Activated CD8-positive, alpha-beta T cell treated with anti-CD3 and anti-CD28 coated beads for 36 hours (primary cell): ENCODE measurements at regions of chr16 and their contacts with region 1.

Region 1: DNA sequence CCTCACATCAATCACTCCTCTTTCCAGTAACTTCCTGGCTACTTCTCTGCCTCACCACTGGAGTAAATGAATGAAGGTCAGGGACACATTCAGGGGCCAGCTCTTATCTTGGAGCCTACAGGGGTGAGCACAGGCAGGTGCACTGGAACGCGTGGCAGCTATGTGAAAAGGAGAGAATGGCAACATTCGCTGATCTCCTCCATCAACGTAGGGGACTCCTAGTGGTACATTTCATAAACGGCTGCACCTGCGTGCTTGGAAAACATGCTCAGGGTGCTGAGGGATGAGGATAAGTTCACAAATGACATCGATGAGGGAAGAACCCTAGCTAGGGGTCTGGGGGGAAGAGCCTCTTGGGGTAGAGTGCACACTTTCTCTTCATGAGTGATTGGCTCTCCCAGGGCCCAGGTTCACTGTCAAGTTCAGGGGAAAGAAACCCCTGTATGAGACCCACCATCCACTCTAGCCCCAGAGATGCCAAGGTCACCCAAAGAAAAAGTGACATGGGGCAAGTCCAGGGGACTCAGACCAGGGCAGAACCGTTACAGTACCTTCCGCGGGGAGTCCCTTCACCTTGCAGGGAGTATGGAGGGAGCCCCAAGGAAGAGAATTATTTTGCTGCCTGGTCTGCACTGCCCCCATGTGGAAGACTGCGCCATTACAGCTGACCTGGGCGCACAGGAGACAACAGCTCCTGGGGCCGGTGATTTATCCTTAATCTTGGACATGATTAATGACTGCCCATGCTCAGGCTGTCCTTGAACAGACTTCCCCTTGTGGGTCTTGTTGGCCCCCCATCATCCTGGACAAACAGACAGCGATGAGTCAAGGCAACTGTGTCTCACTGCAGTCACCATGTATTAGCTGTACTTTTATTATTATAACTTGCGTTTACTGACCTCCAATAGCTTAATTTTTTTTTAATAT is 30.1 kb downstream of the VAC14 start:
- DNase-seq: peak; percentile 73
- ATAC-seq: peak; percentile 97
- H3K4me3 Mint-ChIP-seq: no peak overlapping the region
- H3K27ac Mint-ChIP-seq: no peak overlapping the region
- H3K4me1 Mint-ChIP-seq: no peaks in the 10 kb centered on the region
- H3K27me3 Mint-ChIP-seq: no peaks in the 10 kb centered on the region
- CTCF ChIP-seq: peak; percentile 97

Region 2: DNA sequence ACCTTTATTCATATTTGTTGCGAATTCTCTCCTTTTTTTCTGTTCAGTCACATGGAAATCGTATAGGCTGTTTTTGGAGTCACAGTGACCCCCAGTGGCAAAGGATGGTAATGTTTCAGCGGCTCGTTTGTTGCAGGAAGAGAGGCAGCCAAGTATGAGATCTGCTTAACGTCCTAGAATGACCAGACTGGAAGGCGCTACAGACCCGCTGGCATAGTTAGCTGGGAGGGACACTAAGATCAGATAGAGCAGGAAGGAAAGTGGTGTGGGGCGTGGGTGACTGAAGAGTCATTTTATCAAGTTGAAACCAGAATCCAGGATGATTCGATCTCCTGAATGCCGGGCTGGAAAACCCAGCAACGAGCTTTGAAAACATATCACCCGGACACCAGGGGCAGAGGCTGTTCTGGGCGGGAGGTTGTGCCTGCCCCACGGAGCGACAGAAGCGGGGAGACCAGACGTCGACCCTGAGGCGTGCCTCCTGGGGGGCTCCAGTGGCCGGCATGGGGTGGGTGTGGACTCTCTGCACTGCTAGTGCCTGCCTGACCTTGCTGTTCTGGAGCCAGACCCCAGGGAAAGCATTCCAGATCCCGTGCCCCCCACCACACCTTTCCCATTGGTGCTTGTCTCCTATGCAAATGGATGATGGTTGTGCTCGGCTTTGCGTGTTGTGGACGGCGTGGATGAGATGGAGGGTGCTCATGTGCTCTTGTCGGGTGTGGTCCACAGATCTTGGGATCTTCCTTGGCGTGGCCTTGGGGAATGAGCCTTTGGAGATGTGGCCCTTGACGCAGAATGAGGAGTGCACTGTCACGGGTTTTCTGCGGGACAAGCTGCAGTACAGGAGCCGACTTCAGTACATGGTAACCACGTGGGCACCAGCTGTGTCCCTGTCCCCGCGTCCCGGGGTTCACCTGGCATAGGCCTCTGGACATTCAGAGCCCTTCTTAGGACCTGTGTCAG is 116.8 kb before region 1 on chr16:
- CTCF ChIA-PET with region 1: interaction called, 23 read pairs
- POLR2A ChIA-PET with region 1: no interaction called
- intact Hi-C with region 1: no loop called
- DNase-seq: peak; percentile 87
- ATAC-seq: peak; percentile 92
- H3K4me3 Mint-ChIP-seq: no peak overlapping the region
- H3K27ac Mint-ChIP-seq: no peak overlapping the region
- H3K4me1 Mint-ChIP-seq: peaks cover 4% of the 10 kb centered on the region
- H3K27me3 Mint-ChIP-seq: no peaks in the 10 kb centered on the region
- CTCF ChIP-seq: peak; percentile 94

Region 3: DNA sequence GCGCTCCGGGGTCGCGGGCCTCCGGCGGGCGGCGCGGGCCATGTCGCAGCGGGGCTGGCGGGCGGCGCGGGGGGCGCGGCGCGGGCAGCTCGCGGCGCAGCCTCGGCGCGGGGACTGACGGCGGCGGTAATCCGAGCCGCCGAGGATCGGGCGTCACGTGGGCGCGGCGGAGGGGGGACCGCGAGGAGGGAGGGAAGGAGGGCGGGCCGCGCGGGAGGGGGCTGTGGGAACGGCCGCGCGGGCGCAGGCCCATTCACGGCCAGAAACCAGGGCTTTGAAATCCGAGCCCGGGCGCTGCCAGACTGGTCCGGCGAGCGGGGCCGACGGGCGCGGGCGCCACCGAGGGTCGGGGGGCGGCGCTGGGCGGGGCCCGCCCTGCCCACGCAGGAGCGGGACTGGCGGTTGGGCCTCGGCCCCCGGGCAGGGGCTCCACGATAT is 84.9 kb before region 1 on chr16 and contains the start of gene MTSS2:
- CTCF ChIA-PET with region 1: interaction called, 94 read pairs
- POLR2A ChIA-PET with region 1: no interaction called
- intact Hi-C with region 1: loop called (anchors 5 kb)
- DNase-seq: peak; percentile 53
- ATAC-seq: peak; percentile 47
- H3K4me3 Mint-ChIP-seq: peak within 1 kb of the TSS; percentile 68
- H3K27ac Mint-ChIP-seq: no peak within 1 kb of the TSS
- H3K4me1 Mint-ChIP-seq: peaks cover 4% of the 10 kb centered on the region
- H3K27me3 Mint-ChIP-seq: no peaks in the 10 kb centered on the region
- CTCF ChIP-seq: no peak
- total RNA-seq, gene MTSS2: 4.4 to 4.6 TPM

Region 4: DNA sequence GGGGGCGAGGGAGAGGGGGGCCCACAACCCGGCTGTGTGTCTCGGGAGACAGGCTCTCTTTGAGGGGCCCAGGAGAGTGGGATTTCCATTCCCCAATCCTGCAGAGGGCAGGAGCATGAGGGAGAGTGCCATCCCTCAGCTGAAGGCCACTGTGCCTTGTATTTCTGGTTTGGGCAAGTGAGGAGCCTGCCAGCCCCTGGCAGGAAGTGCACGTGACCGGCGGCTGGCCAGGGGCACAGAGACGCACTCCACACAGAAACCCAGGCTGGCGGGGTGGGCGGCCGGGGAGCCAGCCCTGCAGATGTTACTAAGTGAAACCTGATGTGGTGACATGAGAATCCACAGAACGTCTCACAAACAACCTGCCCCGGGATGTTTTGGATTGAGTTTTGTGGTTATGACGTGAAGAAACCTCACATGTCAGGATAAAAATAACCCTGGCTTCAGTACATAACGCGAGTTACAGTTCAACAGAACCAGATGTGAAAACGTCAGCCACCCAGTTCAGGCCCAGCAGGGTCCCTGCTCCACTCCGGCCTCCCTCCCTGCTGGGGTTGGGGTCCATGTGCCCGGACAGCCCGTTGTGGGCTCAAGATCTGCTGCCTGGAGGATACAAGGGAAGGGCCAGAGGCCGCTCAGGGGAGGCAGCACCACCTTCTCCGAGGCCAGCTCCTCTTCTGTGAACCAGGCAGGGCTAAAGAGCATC is 33.4 kb before region 1 on chr16:
- CTCF ChIA-PET with region 1: interaction called, 18 read pairs
- POLR2A ChIA-PET with region 1: interaction called, 3 read pairs
- intact Hi-C with region 1: no loop called
- DNase-seq: peak; percentile 94
- ATAC-seq: peak; percentile 79
- H3K4me3 Mint-ChIP-seq: peak overlapping the region; percentile 66
- H3K27ac Mint-ChIP-seq: peak overlapping the region; percentile 96
- H3K4me1 Mint-ChIP-seq: peaks cover 74% of the 10 kb centered on the region
- H3K27me3 Mint-ChIP-seq: no peaks in the 10 kb centered on the region
- CTCF ChIP-seq: no peak

Region 5: GRCh38 chr16:70759666-70760065 is 11.2 kb before region 1 on chr16:
- CTCF ChIA-PET with region 1: interaction called, 19 read pairs
- POLR2A ChIA-PET with region 1: no interaction called
- intact Hi-C with region 1: no loop called
- DNase-seq: no peak
- ATAC-seq: no peak
- H3K4me3 Mint-ChIP-seq: no peak overlapping the region
- H3K27ac Mint-ChIP-seq: no peak overlapping the region
- H3K4me1 Mint-ChIP-seq: peaks cover 4% of the 10 kb centered on the region
- H3K27me3 Mint-ChIP-seq: no peaks in the 10 kb centered on the region
- CTCF ChIP-seq: no peak

Region 6: GRCh38 chr16:71282943-71283342 is 512.1 kb after region 1 on chr16:
- CTCF ChIA-PET with region 1: no interaction called
- POLR2A ChIA-PET with region 1: no interaction called
- intact Hi-C with region 1: no loop called
- DNase-seq: no peak
- ATAC-seq: no peak
- H3K4me3 Mint-ChIP-seq: no peak overlapping the region
- H3K27ac Mint-ChIP-seq: no peak overlapping the region
- H3K4me1 Mint-ChIP-seq: peaks cover 11% of the 10 kb centered on the region
- H3K27me3 Mint-ChIP-seq: no peaks in the 10 kb centered on the region
- CTCF ChIP-seq: no peak